Naive thymus-derived CD4-positive, alpha-beta T cell (primary cell): ENCODE measurements at regions of chr1 and their contacts with region 1.

Region 1: GRCh38 chr1:89261926-89262515 is 10.6 kb downstream of the GBP5 start:
- DNase-seq: no peak
- ATAC-seq: no peak
- H3K4me3 ChIP-seq: peak overlapping the region; percentile 14
- H3K4me3 Mint-ChIP-seq: peak overlapping the region in 5 of 10 donors; percentile 12 to 91 (median 58)
- H3K27ac ChIP-seq: no peak overlapping the region
- H3K27ac Mint-ChIP-seq: peak overlapping the region in 8 of 9 donors; percentile 22 to 93 (median 56)
- H3K4me1 ChIP-seq: peaks cover 39 to 75% of the 10 kb centered on the region in 2 donors
- H3K4me1 Mint-ChIP-seq: peaks cover 49 to 76% (median 68%) of the 10 kb centered on the region in 7 donors
- H3K27me3 ChIP-seq: no peaks in the 10 kb centered on the region
- H3K27me3 Mint-ChIP-seq: no peaks in the 10 kb centered on the region

Region 2: GRCh38 chr1:88998716-88999115 is 263.3 kb before region 1 on chr1:
- CTCF ChIA-PET with region 1: no interaction called
- POLR2A ChIA-PET with region 1: no interaction called
- intact Hi-C with region 1: loop called in 1 of 2 experiments (anchors 5 kb)
- DNase-seq: peak in 7 of 9 donors; percentile 59 to 81 (median 76)
- ATAC-seq: peak; percentile 90
- H3K4me3 ChIP-seq: no peak overlapping the region
- H3K4me3 Mint-ChIP-seq: no peak overlapping the region
- H3K27ac ChIP-seq: no peak overlapping the region
- H3K27ac Mint-ChIP-seq: peak overlapping the region in 1 of 9 donors; percentile 68
- H3K4me1 ChIP-seq: peaks cover 12 to 19% of the 10 kb centered on the region in 2 donors
- H3K4me1 Mint-ChIP-seq: peaks cover 17 to 49% (median 34%) of the 10 kb centered on the region in 7 donors
- H3K27me3 ChIP-seq: no peaks in the 10 kb centered on the region
- H3K27me3 Mint-ChIP-seq: peaks cover 0 to 2% (median 0%) of the 10 kb centered on the region in 5 donors

Region 3: GRCh38 chr1:89098857-89099256 is 163.2 kb before region 1 on chr1:
- CTCF ChIA-PET with region 1: no interaction called
- POLR2A ChIA-PET with region 1: no interaction called
- intact Hi-C with region 1: no loop called
- DNase-seq: no peak
- ATAC-seq: no peak
- H3K4me3 ChIP-seq: no peak overlapping the region
- H3K4me3 Mint-ChIP-seq: no peak overlapping the region
- H3K27ac ChIP-seq: no peak overlapping the region
- H3K27ac Mint-ChIP-seq: peak overlapping the region in 1 of 9 donors; percentile 71
- H3K4me1 ChIP-seq: no peaks in the 10 kb centered on the region
- H3K4me1 Mint-ChIP-seq: peaks cover 0 to 8% (median 0%) of the 10 kb centered on the region in 7 donors
- H3K27me3 ChIP-seq: no peaks in the 10 kb centered on the region
- H3K27me3 Mint-ChIP-seq: peaks cover 0 to 3% (median 0%) of the 10 kb centered on the region in 5 donors

Region 4: DNA sequence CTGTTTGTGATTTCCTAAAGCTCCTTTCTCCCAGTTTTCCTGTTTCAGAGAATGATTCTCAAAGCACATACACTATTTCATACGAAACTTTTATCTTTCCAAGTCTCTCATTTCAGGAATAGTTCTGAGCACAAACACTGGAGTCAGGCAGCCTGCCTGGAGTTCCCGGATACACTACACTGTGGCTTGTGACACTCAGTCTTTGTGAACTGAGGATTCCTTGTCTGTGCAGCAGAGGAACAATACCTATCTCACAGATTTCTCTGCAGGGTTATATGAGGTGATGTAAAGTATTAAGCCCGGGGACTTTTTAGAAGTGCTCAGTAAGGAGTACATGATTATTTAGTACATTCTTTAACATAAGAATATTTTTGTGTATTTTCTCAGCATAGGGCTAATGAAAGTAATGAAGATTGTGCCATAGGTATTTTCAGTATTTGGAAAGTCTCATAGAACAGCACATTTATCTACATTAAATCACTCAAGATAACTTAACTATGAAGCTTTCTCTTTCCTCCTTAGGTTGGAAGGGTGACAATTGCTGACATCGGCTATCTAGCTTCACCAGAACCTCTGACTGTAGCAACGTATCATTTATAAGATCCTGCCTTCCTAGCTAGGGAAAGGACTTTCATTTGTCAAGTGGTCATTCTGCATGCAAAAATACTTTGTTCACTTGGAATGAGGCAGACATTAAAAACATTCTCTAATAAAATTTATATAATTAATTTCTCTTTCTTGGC is 149.0 kb before region 1 on chr1:
- CTCF ChIA-PET with region 1: no interaction called
- POLR2A ChIA-PET with region 1: no interaction called
- intact Hi-C with region 1: loop called in 1 of 2 experiments (anchors 10 kb)
- DNase-seq: no peak
- ATAC-seq: no peak
- H3K4me3 ChIP-seq: no peak overlapping the region
- H3K4me3 Mint-ChIP-seq: no peak overlapping the region
- H3K27ac ChIP-seq: no peak overlapping the region
- H3K27ac Mint-ChIP-seq: peak overlapping the region in 8 of 9 donors; percentile 52 to 83 (median 67)
- H3K4me1 ChIP-seq: no peaks in the 10 kb centered on the region
- H3K4me1 Mint-ChIP-seq: peaks cover 13 to 47% (median 31%) of the 10 kb centered on the region in 7 donors
- H3K27me3 ChIP-seq: no peaks in the 10 kb centered on the region
- H3K27me3 Mint-ChIP-seq: no peaks in the 10 kb centered on the region

Region 5: DNA sequence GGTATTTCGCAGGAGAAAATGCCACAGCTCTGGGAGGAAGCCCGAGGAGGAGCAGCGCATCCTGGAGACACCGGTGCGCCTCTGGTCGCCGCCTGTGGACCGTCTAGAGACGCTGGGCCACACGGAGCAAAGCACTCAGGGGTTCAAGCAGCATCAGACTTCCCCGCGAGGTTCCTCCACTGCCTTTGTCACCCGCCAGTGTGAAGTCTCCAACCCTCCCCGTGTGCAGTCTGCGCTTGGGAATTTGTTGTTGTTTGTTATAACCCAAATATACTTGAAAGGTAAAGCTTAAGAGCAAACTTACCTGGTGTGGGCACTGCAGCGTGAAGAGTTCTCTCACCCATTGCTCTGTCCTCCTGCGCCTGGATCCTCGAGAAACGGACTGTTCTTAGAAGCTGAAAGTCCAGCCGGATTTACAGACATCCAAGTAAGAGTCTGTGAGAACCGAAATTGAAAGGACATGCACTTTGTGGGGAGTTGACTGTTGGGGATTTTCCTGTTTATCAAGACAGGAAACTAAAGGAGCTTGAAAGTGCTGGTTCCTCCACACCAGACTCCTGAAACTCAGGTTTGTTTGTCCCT is 63.4 kb before region 1 on chr1 and contains the start of gene GBP4:
- CTCF ChIA-PET with region 1: interaction called, 3 read pairs
- POLR2A ChIA-PET with region 1: interaction called, 7 read pairs
- intact Hi-C with region 1: loop called (anchors 2 to 5 kb)
- DNase-seq: peak; percentile 25 to 49 (median 41)
- ATAC-seq: peak; percentile 73
- H3K4me3 ChIP-seq: peak within 1 kb of the TSS; percentile 92
- H3K4me3 Mint-ChIP-seq: peak within 1 kb of the TSS; percentile 91 to 99 (median 97)
- H3K27ac ChIP-seq: peak within 1 kb of the TSS; percentile 88
- H3K27ac Mint-ChIP-seq: peak within 1 kb of the TSS; percentile 91 to 99 (median 95)
- H3K4me1 ChIP-seq: peaks cover 42 to 47% of the 10 kb centered on the region in 2 donors
- H3K4me1 Mint-ChIP-seq: peaks cover 51 to 82% (median 71%) of the 10 kb centered on the region in 7 donors
- H3K27me3 ChIP-seq: no peaks in the 10 kb centered on the region
- H3K27me3 Mint-ChIP-seq: no peaks in the 10 kb centered on the region
- total RNA-seq, gene GBP4: 29.1 to 174 (median 37.4) TPM

Region 6: DNA sequence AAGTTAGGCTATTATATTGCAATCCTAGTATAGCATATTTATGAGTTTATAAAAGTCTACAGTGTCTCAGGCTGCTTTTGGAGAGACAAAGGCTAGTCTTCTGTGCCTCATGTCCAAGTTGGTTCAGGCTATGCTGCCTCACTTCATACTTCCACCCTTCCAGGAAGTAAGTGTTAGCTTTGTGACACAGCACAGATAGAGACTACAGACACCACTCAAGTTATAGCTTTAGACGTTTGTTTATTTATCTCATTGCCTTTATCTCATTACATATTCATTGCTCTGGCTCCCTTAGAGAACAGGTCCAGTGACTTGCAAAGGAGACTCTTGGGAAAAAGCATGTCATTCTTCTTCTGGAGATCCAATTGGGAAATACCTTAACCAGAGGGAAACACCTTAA is 40.7 kb before region 1 on chr1:
- CTCF ChIA-PET with region 1: no interaction called
- POLR2A ChIA-PET with region 1: no interaction called
- intact Hi-C with region 1: no loop called
- DNase-seq: no peak
- ATAC-seq: no peak
- H3K4me3 ChIP-seq: no peak overlapping the region
- H3K4me3 Mint-ChIP-seq: no peak overlapping the region
- H3K27ac ChIP-seq: no peak overlapping the region
- H3K27ac Mint-ChIP-seq: no peak overlapping the region
- H3K4me1 ChIP-seq: no peaks in the 10 kb centered on the region
- H3K4me1 Mint-ChIP-seq: peaks cover 0 to 3% (median 0%) of the 10 kb centered on the region in 7 donors
- H3K27me3 ChIP-seq: no peaks in the 10 kb centered on the region
- H3K27me3 Mint-ChIP-seq: peaks cover 0 to 2% (median 0%) of the 10 kb centered on the region in 5 donors

Region 7: DNA sequence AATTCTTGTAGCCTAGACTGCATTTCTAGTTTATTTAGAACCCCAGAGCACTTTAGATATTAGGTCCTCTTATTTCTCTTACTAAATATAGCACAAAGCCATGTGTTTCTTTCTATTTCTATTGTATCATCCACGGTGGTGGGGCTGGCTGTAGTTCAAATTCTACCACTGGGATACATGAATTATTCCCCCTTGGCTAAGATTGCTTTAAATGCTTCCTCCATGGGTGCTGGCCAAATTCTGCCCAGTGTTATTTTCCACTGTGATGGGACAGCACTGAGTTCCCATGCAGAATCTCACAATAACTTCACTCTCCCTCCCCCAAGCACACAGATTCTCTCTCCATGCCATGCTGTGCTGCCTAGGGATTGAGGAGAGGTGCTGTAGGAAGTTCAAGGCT is 60.4 kb after region 1 on chr1:
- CTCF ChIA-PET with region 1: no interaction called
- POLR2A ChIA-PET with region 1: no interaction called
- intact Hi-C with region 1: no loop called
- DNase-seq: no peak
- ATAC-seq: no peak
- H3K4me3 ChIP-seq: no peak overlapping the region
- H3K4me3 Mint-ChIP-seq: no peak overlapping the region
- H3K27ac ChIP-seq: no peak overlapping the region
- H3K27ac Mint-ChIP-seq: peak overlapping the region in 1 of 9 donors; percentile 4
- H3K4me1 ChIP-seq: no peaks in the 10 kb centered on the region
- H3K4me1 Mint-ChIP-seq: peaks cover 4 to 9% (median 6%) of the 10 kb centered on the region in 7 donors
- H3K27me3 ChIP-seq: no peaks in the 10 kb centered on the region
- H3K27me3 Mint-ChIP-seq: peaks cover 0 to 5% (median 0%) of the 10 kb centered on the region in 5 donors